ENCODE measurements at regions of chr12 and their contacts with region 1.

Region 1: DNA sequence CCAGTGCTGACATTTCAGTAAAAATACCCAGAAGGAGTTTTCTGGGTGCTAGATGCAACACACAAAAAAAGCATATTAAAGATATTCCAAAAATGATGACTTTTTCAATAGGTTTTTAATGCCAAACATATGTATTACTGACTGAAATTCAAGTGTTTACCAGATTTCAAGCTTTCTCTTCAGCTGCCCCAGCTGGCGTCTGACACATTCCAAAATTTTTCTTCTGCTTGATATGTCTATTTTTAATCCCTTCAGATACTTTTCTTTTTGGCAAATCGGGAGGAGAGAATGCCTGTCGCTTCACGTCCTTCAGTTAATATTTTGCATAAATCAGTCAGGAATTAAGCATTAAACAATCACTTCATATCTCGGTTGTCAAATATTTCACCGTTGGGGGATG is 7.1 kb upstream of the CCDC60 start:
- DNase-seq: no peak
- H3K4me3 ChIP-seq: no peak overlapping the region
- H3K27ac ChIP-seq: no peak overlapping the region
- H3K4me1 ChIP-seq: no peaks in the 10 kb centered on the region
- H3K27me3 ChIP-seq: peaks cover 0 to 15% of the 10 kb centered on the region in 2 donors
- CTCF ChIP-seq: no peak
- POLR2A ChIP-seq: no peak

Region 2: DNA sequence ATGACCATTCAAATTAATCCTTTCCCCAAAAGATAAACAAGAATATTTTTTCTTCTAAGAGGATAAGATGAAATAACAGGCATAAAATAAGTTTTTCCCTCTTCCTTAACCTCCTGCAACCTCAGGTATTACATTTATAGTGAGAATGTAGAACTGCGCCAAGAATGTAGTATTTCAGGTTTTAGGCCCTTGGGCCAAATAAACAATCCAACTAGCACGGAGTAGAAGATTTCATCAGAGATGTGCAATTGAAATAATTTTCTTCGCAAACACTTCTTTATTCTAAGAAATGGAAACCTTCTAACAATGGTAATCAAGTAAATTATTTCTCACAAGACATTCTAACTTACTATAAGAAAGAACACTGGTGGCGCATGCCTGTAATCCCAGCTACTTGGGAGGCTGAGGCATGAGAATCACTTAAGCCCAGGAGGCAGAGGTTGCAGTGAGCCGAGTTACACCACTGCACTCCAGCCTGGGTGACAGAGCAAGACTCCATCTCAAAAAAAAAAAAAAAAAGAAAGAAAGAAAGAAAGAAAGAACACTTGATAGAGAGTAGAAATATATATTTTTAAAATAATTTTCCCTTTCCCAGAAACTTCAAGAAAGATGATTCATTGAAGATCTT is 1055.6 kb before region 1 on chr12:
- intact Hi-C with region 1: no loop called
- DNase-seq: peak in 1 of 2 donors; percentile 62
- H3K4me3 ChIP-seq: no peak overlapping the region
- H3K27ac ChIP-seq: peak overlapping the region; percentile 49 to 78
- H3K4me1 ChIP-seq: no peaks in the 10 kb centered on the region
- H3K27me3 ChIP-seq: no peaks in the 10 kb centered on the region
- CTCF ChIP-seq: no peak
- POLR2A ChIP-seq: no peak

Region 3: DNA sequence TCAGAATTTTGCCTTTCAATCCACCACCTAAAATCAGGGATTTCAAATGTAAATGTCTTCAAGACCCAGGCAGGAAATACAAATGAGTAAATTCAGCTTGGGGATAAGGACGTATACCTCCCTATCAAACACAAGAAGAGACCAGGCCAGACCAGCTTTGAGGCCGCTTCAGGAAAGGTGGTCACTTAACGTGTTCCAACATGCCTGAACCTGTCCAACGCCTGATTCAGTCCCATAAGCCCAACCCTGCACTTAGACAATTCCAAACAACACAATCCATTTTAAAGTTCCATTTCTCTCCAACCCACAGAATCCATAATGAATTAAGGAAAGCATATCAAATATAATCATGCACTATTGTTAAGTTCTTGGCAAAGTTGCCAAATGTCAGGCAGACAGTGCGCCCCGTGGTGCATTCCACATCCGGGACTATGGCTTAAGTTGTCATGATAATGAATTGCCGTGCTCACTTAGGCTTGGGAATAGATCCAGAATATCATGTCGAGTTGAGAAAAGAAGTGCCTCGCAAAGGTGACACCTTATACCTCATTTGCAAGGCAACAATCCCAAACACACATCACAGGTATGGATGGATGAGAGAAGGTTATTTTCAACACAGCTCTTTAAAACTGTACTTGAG is 42.6 kb after region 1 on chr12:
- intact Hi-C with region 1: no loop called
- DNase-seq: no peak
- H3K4me3 ChIP-seq: no peak overlapping the region
- H3K27ac ChIP-seq: no peak overlapping the region
- H3K4me1 ChIP-seq: no peaks in the 10 kb centered on the region
- H3K27me3 ChIP-seq: no peaks in the 10 kb centered on the region
- CTCF ChIP-seq: no peak
- POLR2A ChIP-seq: no peak

Region 4: GRCh38 chr12:119381471-119382235 is 54.2 kb after region 1 on chr12:
- intact Hi-C with region 1: loop called (anchors 2 kb)
- DNase-seq: no peak
- H3K4me3 ChIP-seq: no peak overlapping the region
- H3K27ac ChIP-seq: no peak overlapping the region
- H3K4me1 ChIP-seq: no peaks in the 10 kb centered on the region
- H3K27me3 ChIP-seq: no peaks in the 10 kb centered on the region
- CTCF ChIP-seq: no peak
- POLR2A ChIP-seq: no peak

Region 5: GRCh38 chr12:120067084-120067869 is 739.8 kb after region 1 on chr12:
- intact Hi-C with region 1: no loop called
- DNase-seq: no peak
- H3K4me3 ChIP-seq: no peak overlapping the region
- H3K27ac ChIP-seq: no peak overlapping the region
- H3K4me1 ChIP-seq: no peaks in the 10 kb centered on the region
- H3K27me3 ChIP-seq: no peaks in the 10 kb centered on the region
- CTCF ChIP-seq: no peak
- POLR2A ChIP-seq: no peak

Measured in breast epithelium (tissue), 4 donors.